Endothelial cell of umbilical vein (primary cell): ENCODE measurements at regions of chr16 and their contacts with region 1.

Region 1: DNA sequence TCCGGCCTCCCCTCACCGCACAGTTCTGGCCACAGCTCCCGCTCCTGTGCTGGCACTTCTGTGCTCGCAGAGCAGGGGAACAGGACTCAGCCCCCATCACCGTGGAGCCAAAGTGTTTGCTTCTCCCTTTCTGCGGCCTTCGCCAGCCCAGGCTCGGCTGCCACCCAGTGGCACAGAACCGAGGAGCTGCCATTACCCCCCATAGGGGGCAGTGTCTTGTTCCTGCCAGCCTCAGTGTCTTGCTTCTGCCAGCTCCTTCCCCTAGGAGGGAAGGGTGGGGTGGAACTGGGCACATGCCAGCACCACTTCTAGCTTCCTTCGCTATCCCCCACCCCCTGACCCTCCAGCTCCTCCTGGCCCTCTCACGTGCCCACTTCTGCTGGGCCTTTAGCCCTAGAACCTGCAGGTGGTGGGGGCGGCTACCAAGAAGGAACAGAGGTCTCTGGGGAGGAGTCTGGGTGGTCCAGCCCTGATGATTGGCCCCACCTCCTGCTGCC is 645 bp upstream of the ELMO3 start:
- DNase-seq: peak; percentile 63
- H3K4me3 ChIP-seq: no peak overlapping the region
- H3K27ac ChIP-seq: no peak overlapping the region
- H3K4me1 ChIP-seq: peaks cover 12% of the 10 kb centered on the region
- H3K27me3 ChIP-seq: no peaks in the 10 kb centered on the region
- CTCF ChIP-seq: peak; percentile 92 to 96
- POLR2A ChIP-seq: no peak

Region 2: DNA sequence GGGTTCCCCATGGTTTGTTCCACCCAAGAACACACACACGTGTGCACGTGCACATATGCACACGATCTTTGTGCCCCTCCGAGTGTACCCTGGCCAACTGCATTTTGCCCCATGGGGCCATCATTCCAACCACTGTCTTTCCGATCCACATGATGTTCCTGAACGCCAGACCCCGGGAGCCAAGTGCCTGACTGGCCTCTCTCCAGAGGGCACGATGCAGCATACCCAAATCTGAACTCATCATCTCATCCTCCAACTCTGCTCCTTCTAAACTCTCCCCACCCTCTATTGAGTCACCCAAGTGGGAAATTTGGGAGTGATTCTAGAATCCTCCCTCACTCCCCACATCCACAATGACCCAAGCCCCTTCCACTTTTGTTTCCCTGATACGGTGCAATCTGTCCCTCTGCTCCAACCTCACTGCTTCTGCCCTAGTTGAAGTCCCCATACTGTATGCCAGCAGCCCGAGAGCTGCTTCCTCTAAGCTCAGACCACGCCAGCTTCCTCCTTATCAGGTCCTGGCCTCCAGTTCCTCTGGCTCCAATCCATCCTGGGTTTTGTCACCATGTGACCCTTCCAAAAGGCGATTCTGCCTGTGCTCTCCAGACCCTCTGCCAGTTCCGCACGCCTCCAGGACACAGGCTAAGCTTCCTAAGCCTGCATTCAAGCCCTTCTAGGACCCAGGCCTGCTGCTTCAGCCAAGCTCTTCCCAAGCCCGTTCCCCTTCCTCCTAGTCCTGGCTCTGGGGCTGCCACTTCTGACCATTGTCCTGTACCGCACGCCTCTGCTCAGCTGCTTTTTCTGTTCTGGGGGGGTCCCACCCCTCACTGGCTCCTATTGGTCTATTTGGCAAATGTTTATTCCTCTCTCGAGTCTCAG is 18.6 kb after region 1 on chr16:
- CTCF ChIA-PET with region 1: interaction called, 9 read pairs
- POLR2A ChIA-PET with region 1: interaction called, 3 read pairs
- dilution Hi-C with region 1: no loop called
- intact Hi-C with region 1: loop called (anchors 2 kb)
- DNase-seq: peak; percentile 66
- H3K4me3 ChIP-seq: no peak overlapping the region
- H3K27ac ChIP-seq: peak overlapping the region; percentile 30
- H3K4me1 ChIP-seq: peaks cover 22% of the 10 kb centered on the region
- H3K27me3 ChIP-seq: no peaks in the 10 kb centered on the region
- CTCF ChIP-seq: no peak
- POLR2A ChIP-seq: peak; percentile 26